ENCODE measurements at regions of chr5 and their contacts with region 1.

Region 1: GRCh38 chr5:24804221-24804681 is 159.5 kb upstream of the CDH10 start:
- DNase-seq: no peak
- H3K4me3 ChIP-seq: no peak overlapping the region
- H3K27ac ChIP-seq: no peak overlapping the region
- H3K4me1 ChIP-seq: no peaks in the 10 kb centered on the region
- H3K27me3 ChIP-seq: no peaks in the 10 kb centered on the region
- CTCF ChIP-seq: no peak
- POLR2A ChIP-seq: no peak

Region 2: GRCh38 chr5:24294324-24294723 is 509.9 kb before region 1 on chr5:
- intact Hi-C with region 1: no loop called
- DNase-seq: no peak
- H3K4me3 ChIP-seq: no peak overlapping the region
- H3K27ac ChIP-seq: no peak overlapping the region
- H3K4me1 ChIP-seq: no peaks in the 10 kb centered on the region
- H3K27me3 ChIP-seq: no peaks in the 10 kb centered on the region
- CTCF ChIP-seq: no peak
- POLR2A ChIP-seq: no peak

Region 3: DNA sequence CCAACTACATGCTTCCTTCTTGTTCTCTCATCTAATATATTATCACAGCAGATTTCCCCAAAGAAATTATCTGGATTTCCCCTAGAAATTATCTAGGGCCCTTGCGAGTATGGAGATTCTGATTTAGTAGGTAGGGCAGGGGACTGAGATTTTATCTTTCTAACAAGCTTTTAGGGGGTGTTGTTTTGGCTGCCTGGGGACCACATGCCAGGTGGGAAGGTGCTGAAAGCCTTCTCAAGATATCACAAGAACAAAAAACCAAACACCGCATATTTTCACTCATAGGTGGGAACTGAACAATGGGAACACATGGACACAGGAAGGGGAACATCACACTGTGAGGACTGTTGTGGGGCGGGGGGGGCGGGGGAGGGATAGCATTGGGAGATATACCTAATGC is 12.9 kb before region 1 on chr5:
- intact Hi-C with region 1: loop called (anchors 1 kb)
- DNase-seq: no peak
- H3K4me3 ChIP-seq: no peak overlapping the region
- H3K27ac ChIP-seq: no peak overlapping the region
- H3K4me1 ChIP-seq: no peaks in the 10 kb centered on the region
- H3K27me3 ChIP-seq: no peaks in the 10 kb centered on the region
- CTCF ChIP-seq: no peak
- POLR2A ChIP-seq: no peak

Region 4: DNA sequence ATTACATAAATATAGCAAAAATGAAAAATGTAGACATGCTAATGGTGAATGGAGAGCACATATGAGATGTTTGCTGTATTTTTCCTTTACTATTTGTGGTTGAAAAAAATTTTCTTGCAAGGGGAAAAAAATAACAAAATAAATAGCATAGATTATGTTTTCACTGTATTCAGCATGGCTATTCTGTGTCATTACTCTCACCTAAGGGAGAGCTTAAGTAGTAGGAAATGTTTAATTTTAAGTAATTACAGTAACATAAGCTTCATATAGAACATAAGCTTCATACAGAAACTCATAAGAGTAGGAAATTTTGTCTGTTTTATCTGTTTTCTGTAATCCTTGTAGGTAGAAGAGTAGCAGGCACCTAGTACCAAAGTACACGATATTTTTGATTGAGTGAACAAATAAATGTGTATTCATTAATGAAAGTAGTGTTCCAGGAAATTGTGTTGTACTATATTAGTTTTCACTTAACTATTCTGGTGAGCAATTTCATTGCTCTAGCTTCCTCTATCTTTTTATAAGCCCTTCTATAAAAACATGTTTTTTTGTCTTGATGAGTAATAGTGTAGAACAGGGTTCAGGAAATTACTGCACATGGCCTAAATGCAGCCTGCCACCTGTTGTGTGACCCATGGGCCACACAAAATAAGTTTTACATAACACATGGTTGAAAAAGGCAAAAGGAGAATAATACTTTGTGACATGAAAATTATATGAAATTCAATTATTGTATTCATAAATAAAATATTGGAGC is 865.6 kb after region 1 on chr5:
- intact Hi-C with region 1: no loop called
- DNase-seq: no peak
- H3K4me3 ChIP-seq: no peak overlapping the region
- H3K27ac ChIP-seq: no peak overlapping the region
- H3K4me1 ChIP-seq: no peaks in the 10 kb centered on the region
- H3K27me3 ChIP-seq: no peaks in the 10 kb centered on the region
- CTCF ChIP-seq: no peak
- POLR2A ChIP-seq: no peak